ENCODE measurements at regions of chr7 and their contacts with region 1.

Region 1: DNA sequence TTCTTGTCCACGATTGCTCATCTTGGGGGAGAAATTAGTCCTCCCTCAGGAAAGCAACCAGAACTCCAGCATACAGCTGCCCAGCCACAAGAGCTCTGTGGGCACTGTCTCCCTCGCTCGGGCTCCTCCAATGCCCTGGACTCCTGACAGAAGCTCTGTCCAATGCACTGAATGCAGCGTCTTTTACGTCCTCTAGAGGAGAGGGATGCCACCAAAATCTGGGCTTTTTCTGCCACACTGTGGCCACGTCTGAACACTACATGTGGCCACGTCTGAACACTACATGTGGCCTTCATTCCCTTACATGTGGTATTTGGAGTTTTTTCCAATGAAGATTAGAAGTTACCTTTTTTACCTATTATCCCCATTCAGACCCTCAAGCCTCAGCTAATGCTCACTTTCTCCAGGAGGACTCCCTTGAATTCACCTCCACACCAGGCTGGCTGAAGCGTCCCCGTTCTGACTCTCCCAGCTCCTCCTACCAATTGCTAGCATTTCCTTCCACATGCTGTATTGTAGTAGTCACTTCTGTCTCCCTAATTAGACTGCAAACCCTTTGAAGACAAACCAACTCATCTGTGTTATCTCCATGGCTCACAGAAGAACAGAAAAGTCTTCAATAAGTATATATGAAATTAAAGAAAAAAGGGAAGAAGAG is 134.3 kb upstream of the PDE1C start:
- DNase-seq: peak in 1 of 3 donors; percentile 28
- ATAC-seq: peak; percentile 72 to 94 (median 84)
- H3K4me3 ChIP-seq: no peak overlapping the region
- H3K27ac ChIP-seq: no peak overlapping the region
- H3K4me1 ChIP-seq: no peaks in the 10 kb centered on the region
- H3K27me3 ChIP-seq: no peaks in the 10 kb centered on the region
- CTCF ChIP-seq: peak; percentile 43 to 52 (median 46)
- POLR2A ChIP-seq: no peak

Region 2: GRCh38 chr7:31744294-31744874 is 460.1 kb before region 1 on chr7:
- intact Hi-C with region 1: loop called in 1 of 2 experiments (anchors 10 kb)
- DNase-seq: peak; percentile 45 to 58 (median 57)
- ATAC-seq: peak; percentile 87 to 91 (median 90)
- H3K4me3 ChIP-seq: no peak overlapping the region
- H3K27ac ChIP-seq: no peak overlapping the region
- H3K4me1 ChIP-seq: no peaks in the 10 kb centered on the region
- H3K27me3 ChIP-seq: no peaks in the 10 kb centered on the region
- CTCF ChIP-seq: peak; percentile 83 to 90 (median 86)
- POLR2A ChIP-seq: no peak

Region 3: DNA sequence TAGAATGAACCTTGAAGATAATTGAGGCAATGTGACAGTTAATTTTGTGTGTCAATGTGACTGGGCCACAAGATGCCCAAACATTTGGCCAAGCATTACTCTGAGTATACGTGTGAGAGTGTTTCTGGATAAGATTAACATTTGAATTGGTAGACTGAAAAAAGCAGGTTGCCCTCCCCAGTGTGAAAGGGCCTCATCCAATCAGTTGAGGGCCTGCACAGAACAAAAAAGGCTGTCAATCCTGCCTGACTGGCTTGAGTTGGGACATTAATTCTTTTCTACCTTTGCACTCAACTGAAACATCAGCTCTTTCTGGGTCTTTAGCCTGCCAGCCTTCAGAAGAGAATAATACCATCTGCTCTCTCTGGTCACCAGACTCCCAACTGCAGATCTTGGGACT is 77.6 kb before region 1 on chr7:
- intact Hi-C with region 1: no loop called
- DNase-seq: no peak
- ATAC-seq: no peak
- H3K4me3 ChIP-seq: no peak overlapping the region
- H3K27ac ChIP-seq: no peak overlapping the region
- H3K4me1 ChIP-seq: no peaks in the 10 kb centered on the region
- H3K27me3 ChIP-seq: no peaks in the 10 kb centered on the region
- CTCF ChIP-seq: no peak
- POLR2A ChIP-seq: no peak

Region 4: GRCh38 chr7:32447218-32447617 is 242.7 kb after region 1 on chr7:
- intact Hi-C with region 1: no loop called
- DNase-seq: no peak
- ATAC-seq: no peak
- H3K4me3 ChIP-seq: no peak overlapping the region
- H3K27ac ChIP-seq: no peak overlapping the region
- H3K4me1 ChIP-seq: no peaks in the 10 kb centered on the region
- H3K27me3 ChIP-seq: no peaks in the 10 kb centered on the region
- CTCF ChIP-seq: no peak
- POLR2A ChIP-seq: no peak

Region 5: GRCh38 chr7:32479574-32480200 is 275.2 kb after region 1 on chr7:
- intact Hi-C with region 1: loop called in 1 of 2 experiments (anchors 10 kb)
- DNase-seq: no peak
- ATAC-seq: peak; percentile 67 to 73 (median 68)
- H3K4me3 ChIP-seq: no peak overlapping the region
- H3K27ac ChIP-seq: no peak overlapping the region
- H3K4me1 ChIP-seq: no peaks in the 10 kb centered on the region
- H3K27me3 ChIP-seq: no peaks in the 10 kb centered on the region
- CTCF ChIP-seq: peak; percentile 66 to 85 (median 72)
- POLR2A ChIP-seq: no peak